HEK293 (cell line): ENCODE measurements at regions of chr15 and their contacts with region 1.

Region 1: GRCh38 chr15:43824302-43825246 is at the start of gene MFAP1:
- H3K4me3 ChIP-seq: peak within 1 kb of the TSS; percentile 74
- H3K27ac ChIP-seq: peak within 1 kb of the TSS; percentile 78
- H3K4me1 ChIP-seq: 0 out of 2 replicates have a peak, but pooled peaks cover 4% of the 10 kb centered on the region
- CTCF ChIP-seq: no peak

Region 2: GRCh38 chr15:43791993-43792760 is 32.4 kb before region 1 on chr15 and contains the start of gene SERF2:
- CTCF ChIA-PET with region 1: no interaction called
- POLR2A ChIA-PET with region 1: interaction called, 12 read pairs
- H3K4me3 ChIP-seq: peak within 1 kb of the TSS; percentile 97
- H3K27ac ChIP-seq: peak within 1 kb of the TSS; percentile 60; the same call in 1 of the 2 replicates
- H3K4me1 ChIP-seq: no peaks in the 10 kb centered on the region
- CTCF ChIP-seq: no peak

Region 3: GRCh38 chr15:43800286-43801141 is 24.1 kb before region 1 on chr15 and contains the start of gene HYPK:
- CTCF ChIA-PET with region 1: interaction called, 3 read pairs
- POLR2A ChIA-PET with region 1: interaction called, 12 read pairs
- H3K4me3 ChIP-seq: peak within 1 kb of the TSS; percentile 88
- H3K27ac ChIP-seq: peak within 1 kb of the TSS; percentile 65
- H3K4me1 ChIP-seq: 0 out of 2 replicates have a peak, but pooled peaks cover 3% of the 10 kb centered on the region
- CTCF ChIP-seq: no peak